MCF 10A (cell line): ENCODE measurements at regions of chr12 and their contacts with region 1.

Region 1: GRCh38 chr12:15220994-15221885 is at the start of gene RERG:
- DNase-seq: peak; percentile 82
- H3K4me3 Mint-ChIP-seq: peak within 1 kb of the TSS; percentile 80
- H3K27ac Mint-ChIP-seq: peak within 1 kb of the TSS; percentile 68
- H3K4me1 Mint-ChIP-seq: peaks cover 36% of the 10 kb centered on the region
- H3K27me3 Mint-ChIP-seq: no peaks in the 10 kb centered on the region
- CTCF ChIP-seq: peak; percentile 92
- total RNA-seq, gene RERG: 7.6 and 16.5 TPM in 2 replicates

Region 2: GRCh38 chr12:15001733-15002382 is 219.4 kb before region 1 on chr12:
- CTCF ChIA-PET with region 1: interaction called, 11 read pairs
- POLR2A ChIA-PET with region 1: interaction called, 4 read pairs
- intact Hi-C with region 1: loop called (anchors 2 kb)
- DNase-seq: peak; percentile 29
- H3K4me3 Mint-ChIP-seq: no peak overlapping the region
- H3K27ac Mint-ChIP-seq: no peak overlapping the region
- H3K4me1 Mint-ChIP-seq: peaks cover 23% of the 10 kb centered on the region
- H3K27me3 Mint-ChIP-seq: no peaks in the 10 kb centered on the region
- CTCF ChIP-seq: no peak

Region 3: DNA sequence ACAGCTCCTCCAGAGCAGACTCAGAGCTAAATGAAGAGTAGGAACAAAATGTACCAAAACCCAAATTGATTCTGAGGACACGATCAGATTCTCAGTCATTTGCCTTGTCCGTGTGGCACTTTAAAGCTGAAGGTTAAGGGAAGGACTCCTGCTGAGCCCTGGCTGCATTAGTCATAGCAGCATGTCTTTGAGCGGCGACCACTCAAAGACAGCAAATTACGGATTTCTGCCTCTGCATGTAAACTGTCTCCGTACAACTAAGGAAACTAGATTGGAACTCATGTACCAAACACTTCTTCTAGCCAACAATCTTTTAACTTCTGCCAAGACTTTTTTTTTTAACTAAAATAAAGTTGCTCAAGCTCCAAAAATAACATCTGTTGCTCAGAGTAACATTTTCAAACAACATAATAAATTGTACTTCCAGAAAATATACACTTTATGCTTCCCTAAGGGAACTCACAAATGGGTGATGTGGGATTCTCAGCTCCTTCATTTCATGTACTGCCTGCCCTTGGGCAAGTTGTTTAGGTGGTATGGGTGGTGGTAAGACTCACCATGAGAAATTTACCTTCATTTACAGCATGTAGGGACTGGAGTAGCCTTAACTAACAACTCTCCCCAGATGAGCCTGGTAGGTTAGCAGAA is 56.1 kb before region 1 on chr12:
- CTCF ChIA-PET with region 1: interaction called, 12 read pairs
- POLR2A ChIA-PET with region 1: no interaction called
- intact Hi-C with region 1: no loop called
- DNase-seq: peak; percentile 56
- H3K4me3 Mint-ChIP-seq: peak overlapping the region; percentile 30
- H3K27ac Mint-ChIP-seq: peak overlapping the region; percentile 72
- H3K4me1 Mint-ChIP-seq: peaks cover 34% of the 10 kb centered on the region
- H3K27me3 Mint-ChIP-seq: no peaks in the 10 kb centered on the region
- CTCF ChIP-seq: no peak

Region 4: GRCh38 chr12:15193946-15194345 is 27.3 kb before region 1 on chr12:
- CTCF ChIA-PET with region 1: interaction called, 22 read pairs
- POLR2A ChIA-PET with region 1: interaction called, 3 read pairs
- intact Hi-C with region 1: loop called (anchors 1 kb)
- DNase-seq: peak; percentile 74
- H3K4me3 Mint-ChIP-seq: peak overlapping the region; percentile 22
- H3K27ac Mint-ChIP-seq: peak overlapping the region; percentile 84
- H3K4me1 Mint-ChIP-seq: peaks cover 37% of the 10 kb centered on the region
- H3K27me3 Mint-ChIP-seq: no peaks in the 10 kb centered on the region
- CTCF ChIP-seq: no peak

Region 5: GRCh38 chr12:15276088-15276698 is 55.0 kb after region 1 on chr12:
- CTCF ChIA-PET with region 1: interaction called, 109 read pairs
- POLR2A ChIA-PET with region 1: interaction called, 4 read pairs
- intact Hi-C with region 1: no loop called
- DNase-seq: peak; percentile 78
- H3K4me3 Mint-ChIP-seq: peak overlapping the region; percentile 25
- H3K27ac Mint-ChIP-seq: peak overlapping the region; percentile 95
- H3K4me1 Mint-ChIP-seq: peaks cover 55% of the 10 kb centered on the region
- H3K27me3 Mint-ChIP-seq: no peaks in the 10 kb centered on the region
- CTCF ChIP-seq: peak; percentile 61